ENCODE measurements at regions of chr5 and their contacts with region 1.

Region 1: GRCh38 chr5:145825751-145826180 is 9.4 kb downstream of the PRELID2 start:
- DNase-seq: no peak
- H3K4me3 ChIP-seq: no peak overlapping the region
- CTCF ChIP-seq: peak; percentile 67

Region 2: DNA sequence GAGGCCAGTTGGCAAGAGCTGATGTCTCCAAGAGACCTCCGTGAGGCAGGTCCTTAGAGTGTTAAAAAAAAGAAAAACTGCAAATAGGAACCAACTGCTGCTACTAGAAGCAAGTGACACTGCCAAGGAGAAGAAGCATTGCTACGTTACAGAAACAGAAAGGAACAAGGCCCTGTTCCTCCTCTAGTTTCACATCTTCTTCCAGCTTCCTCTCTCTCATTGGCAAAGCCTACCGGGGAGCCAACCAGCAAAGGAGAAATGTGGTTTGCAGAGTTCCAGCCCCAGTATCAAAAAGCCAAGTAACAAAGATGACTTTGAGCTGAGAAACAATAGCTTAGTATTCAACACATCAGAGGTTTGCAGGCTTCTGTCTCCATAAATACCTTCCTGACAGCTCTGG is 136.5 kb before region 1 on chr5:
- CTCF ChIA-PET with region 1: no interaction called
- POLR2A ChIA-PET with region 1: no interaction called
- DNase-seq: no peak
- H3K4me3 ChIP-seq: no peak overlapping the region
- CTCF ChIP-seq: no peak

Region 3: DNA sequence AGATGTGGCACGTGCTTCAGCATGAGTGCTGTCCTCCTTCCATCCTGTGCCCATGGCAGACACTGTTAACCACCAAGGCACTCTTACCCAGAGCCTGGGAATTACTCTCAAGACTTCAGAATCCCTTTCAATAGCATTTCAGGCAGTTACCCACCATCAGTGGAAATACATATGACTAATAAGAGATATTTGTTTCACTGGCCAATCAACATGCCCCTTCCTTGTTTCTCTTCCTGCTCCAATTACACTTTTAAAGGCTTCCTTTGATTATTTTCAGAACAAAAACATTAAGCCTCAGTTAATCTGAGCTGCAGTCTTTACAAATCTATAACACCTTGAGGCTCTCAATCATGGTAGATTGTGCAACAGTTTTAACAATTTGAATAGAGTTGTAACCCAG is 61.4 kb before region 1 on chr5:
- CTCF ChIA-PET with region 1: no interaction called
- POLR2A ChIA-PET with region 1: no interaction called
- DNase-seq: no peak
- H3K4me3 ChIP-seq: no peak overlapping the region
- CTCF ChIP-seq: no peak

Region 4: GRCh38 chr5:145811834-145812625 is 13.7 kb before region 1 on chr5:
- CTCF ChIA-PET with region 1: interaction called, 95 read pairs
- POLR2A ChIA-PET with region 1: no interaction called
- DNase-seq: no peak
- H3K4me3 ChIP-seq: no peak overlapping the region
- CTCF ChIP-seq: peak; percentile 25

Region 5: DNA sequence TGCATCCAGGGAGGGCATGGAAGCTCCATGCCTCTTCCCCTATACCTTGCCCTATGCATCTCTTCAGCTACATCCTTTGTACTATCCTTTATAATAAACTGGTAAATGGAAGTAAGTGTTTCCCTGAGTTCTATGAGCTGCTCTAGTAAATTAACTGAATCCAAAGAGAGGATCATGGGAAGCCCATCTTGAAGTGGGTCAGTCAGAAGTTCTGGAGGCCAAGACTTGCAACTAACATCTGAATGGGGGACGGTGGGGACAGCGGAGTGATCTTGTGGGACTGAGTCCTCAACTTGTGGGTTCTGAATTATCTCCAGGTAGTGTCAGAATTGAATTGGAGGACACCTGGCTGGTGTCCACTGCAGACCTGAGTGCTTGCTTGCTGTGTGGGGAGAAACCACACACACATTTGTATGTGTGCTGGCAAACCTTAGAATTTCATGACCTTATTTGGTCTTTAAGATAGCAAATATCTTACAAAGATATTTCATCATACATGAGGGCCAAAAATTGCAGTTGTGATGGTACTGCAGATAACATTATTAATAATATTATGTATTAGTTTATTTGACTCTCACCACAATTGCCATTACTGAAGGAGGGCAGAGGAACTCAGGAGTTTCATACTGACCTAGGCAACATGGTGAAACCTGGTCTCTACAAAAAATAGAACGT is 14.8 kb after region 1 on chr5:
- CTCF ChIA-PET with region 1: interaction called, 16 read pairs
- POLR2A ChIA-PET with region 1: no interaction called
- DNase-seq: no peak
- H3K4me3 ChIP-seq: no peak overlapping the region
- CTCF ChIP-seq: no peak

Region 6: GRCh38 chr5:145968970-145969713 is 143.4 kb after region 1 on chr5:
- CTCF ChIA-PET with region 1: no interaction called
- POLR2A ChIA-PET with region 1: no interaction called
- DNase-seq: no peak
- H3K4me3 ChIP-seq: no peak overlapping the region
- CTCF ChIP-seq: no peak